K562 (cell line): ENCODE measurements at regions of chr6 and their contacts with region 1.

Region 1: GRCh38 chr6:97394160-97394748 is 111.2 kb upstream of the MMS22L start:
- DNase-seq: peak; percentile 59 to 73 (median 64)
- ATAC-seq: peak; percentile 81
- H3K4me3 ChIP-seq: no peak overlapping the region
- H3K27ac ChIP-seq: no peak overlapping the region
- H3K4me1 ChIP-seq: no peaks in the 10 kb centered on the region
- H3K27me3 ChIP-seq: no peaks in the 10 kb centered on the region
- CTCF ChIP-seq: peak; percentile 70 to 89 (median 72)
- EP300 ChIP-seq: no peak
- POLR2A ChIP-seq: no peak
- RAD21 ChIP-seq: peak; percentile 91 to 92

Region 2: GRCh38 chr6:97068211-97068610 is 326.0 kb before region 1 on chr6:
- CTCF ChIA-PET with region 1: no interaction called
- POLR2A ChIA-PET with region 1: no interaction called
- in situ Hi-C with region 1: loop called (anchors 10 kb)
- intact Hi-C with region 1: loop called (anchors 1 kb)
- DNase-seq: peak; percentile 11 to 43 (median 15)
- ATAC-seq: no peak
- H3K4me3 ChIP-seq: no peak overlapping the region
- H3K27ac ChIP-seq: no peak overlapping the region
- H3K4me1 ChIP-seq: no peaks in the 10 kb centered on the region
- H3K27me3 ChIP-seq: no peaks in the 10 kb centered on the region
- CTCF ChIP-seq: peak in 2 of 3 experiments; percentile 39 to 59; a peak in 3 of 6 replicates
- EP300 ChIP-seq: no peak
- POLR2A ChIP-seq: no peak
- RAD21 ChIP-seq: peak; percentile 70 to 72

Region 3: DNA sequence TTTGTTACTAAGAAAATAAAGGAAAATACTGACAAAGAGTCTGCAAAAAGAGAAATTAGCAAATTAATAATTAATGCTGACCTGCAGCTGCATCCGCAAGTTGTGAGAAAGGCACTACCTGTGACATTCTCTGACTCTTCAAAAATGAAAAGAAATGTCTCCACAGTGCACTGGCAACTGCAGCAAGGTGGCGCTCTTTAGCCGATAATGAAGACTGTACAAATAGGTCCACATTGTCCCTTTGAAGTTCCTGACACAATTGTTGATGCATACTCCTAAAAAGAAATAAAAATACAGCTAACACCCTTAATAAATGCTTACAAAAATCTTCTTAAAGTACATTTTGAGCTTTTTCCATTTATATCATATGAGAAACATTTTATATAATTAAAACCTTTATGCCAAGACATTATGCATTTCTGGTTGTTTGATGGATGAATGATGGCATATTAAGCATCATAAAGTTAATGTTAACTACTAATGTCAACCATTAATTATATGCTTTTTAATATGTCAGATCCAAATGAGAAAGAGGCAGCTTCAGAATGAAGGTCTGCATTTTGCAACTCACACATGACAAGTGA is 207.7 kb before region 1 on chr6:
- CTCF ChIA-PET with region 1: interaction called, 17 read pairs
- POLR2A ChIA-PET with region 1: no interaction called
- in situ Hi-C with region 1: loop called (anchors 5 kb)
- intact Hi-C with region 1: loop called (anchors 1 kb)
- DNase-seq: peak; percentile 38 to 77 (median 48)
- ATAC-seq: peak; percentile 96
- H3K4me3 ChIP-seq: no peak overlapping the region
- H3K27ac ChIP-seq: no peak overlapping the region
- H3K4me1 ChIP-seq: no peaks in the 10 kb centered on the region
- H3K27me3 ChIP-seq: no peaks in the 10 kb centered on the region
- CTCF ChIP-seq: peak; percentile 68 to 88 (median 83)
- EP300 ChIP-seq: no peak
- POLR2A ChIP-seq: no peak
- RAD21 ChIP-seq: peak; percentile 76 to 79

Region 4: GRCh38 chr6:97215157-97215769 is 179.0 kb before region 1 on chr6:
- CTCF ChIA-PET with region 1: no interaction called
- POLR2A ChIA-PET with region 1: no interaction called
- in situ Hi-C with region 1: no loop called
- intact Hi-C with region 1: loop called (anchors 1 kb)
- DNase-seq: peak; percentile 18 to 73 (median 34)
- ATAC-seq: peak; percentile 95
- H3K4me3 ChIP-seq: no peak overlapping the region
- H3K27ac ChIP-seq: peak overlapping the region; percentile 41; the same call in 2 of the 3 replicates
- H3K4me1 ChIP-seq: peaks cover 0 to 6% of the 10 kb centered on the region in 2 experiments; a peak in 3 of 5 replicates
- H3K27me3 ChIP-seq: no peaks in the 10 kb centered on the region
- CTCF ChIP-seq: peak; percentile 56 to 78 (median 64)
- EP300 ChIP-seq: 0 out of 2 replicates have a peak, but pooled peaks have one; percentile 8
- POLR2A ChIP-seq: no peak
- RAD21 ChIP-seq: peak; percentile 51 to 61

Region 5: DNA sequence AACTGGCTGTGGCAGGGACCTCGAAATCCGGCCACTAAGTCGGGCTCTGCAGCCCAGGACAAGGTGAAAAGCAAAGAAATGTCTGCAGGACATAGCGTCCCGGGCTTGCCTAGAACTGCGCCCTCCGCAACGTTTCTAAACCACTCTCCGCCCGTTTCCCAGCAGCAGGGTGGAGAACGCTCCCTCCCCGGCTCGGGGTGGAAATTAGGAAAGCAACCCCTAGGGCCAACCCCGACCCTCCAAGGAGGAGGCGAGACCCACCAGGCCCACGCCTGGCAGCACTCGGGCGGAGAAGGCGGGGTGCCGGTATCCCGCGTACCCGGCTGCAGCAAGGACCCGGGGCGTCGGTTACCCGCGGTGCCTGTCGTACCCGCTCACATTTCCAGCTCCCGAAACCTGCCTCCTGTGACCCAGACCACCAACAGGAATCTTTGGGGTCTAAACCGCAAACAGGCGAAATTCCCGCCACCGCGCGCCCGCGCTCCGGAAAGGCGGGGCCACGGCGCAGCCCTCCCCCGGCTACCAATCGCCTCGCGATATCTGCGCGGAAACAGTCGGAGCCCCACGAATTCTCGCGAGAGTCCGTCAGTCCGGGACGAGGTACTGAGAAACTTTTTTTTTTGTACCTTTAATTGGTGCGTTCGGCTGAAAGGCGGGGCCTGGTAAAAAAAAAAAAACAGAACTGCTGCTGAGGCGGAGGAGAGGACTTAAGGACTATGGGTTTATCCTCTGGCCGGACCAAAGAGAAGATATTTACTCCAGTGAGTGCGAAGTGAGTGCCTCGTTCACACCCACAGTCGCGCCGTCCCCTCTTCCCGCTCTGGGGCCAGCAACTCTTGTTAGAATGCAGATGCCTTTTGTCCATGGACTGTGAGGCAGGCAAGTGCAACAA is 111.3 kb before region 1 on chr6 and contains the start of gene MMS22L:
- CTCF ChIA-PET with region 1: no interaction called
- POLR2A ChIA-PET with region 1: no interaction called
- in situ Hi-C with region 1: no loop called
- intact Hi-C with region 1: loop called (anchors 5 kb)
- DNase-seq: peak; percentile 91 to 96 (median 92)
- ATAC-seq: peak; percentile 97
- H3K4me3 ChIP-seq: peak within 1 kb of the TSS; percentile 94
- H3K27ac ChIP-seq: peak within 1 kb of the TSS; percentile 94
- H3K4me1 ChIP-seq: peaks cover 0 to 3% of the 10 kb centered on the region in 2 experiments; a peak in 2 of 5 replicates
- H3K27me3 ChIP-seq: no peaks in the 10 kb centered on the region
- CTCF ChIP-seq: peak in 1 of 3 experiments; percentile 34; a peak in 2 of 6 replicates
- EP300 ChIP-seq: no peak
- POLR2A ChIP-seq: peak; percentile 80
- RAD21 ChIP-seq: no peak
- polyA plus RNA-seq, gene MMS22L: 13.0 to 13.1 TPM

Region 6: DNA sequence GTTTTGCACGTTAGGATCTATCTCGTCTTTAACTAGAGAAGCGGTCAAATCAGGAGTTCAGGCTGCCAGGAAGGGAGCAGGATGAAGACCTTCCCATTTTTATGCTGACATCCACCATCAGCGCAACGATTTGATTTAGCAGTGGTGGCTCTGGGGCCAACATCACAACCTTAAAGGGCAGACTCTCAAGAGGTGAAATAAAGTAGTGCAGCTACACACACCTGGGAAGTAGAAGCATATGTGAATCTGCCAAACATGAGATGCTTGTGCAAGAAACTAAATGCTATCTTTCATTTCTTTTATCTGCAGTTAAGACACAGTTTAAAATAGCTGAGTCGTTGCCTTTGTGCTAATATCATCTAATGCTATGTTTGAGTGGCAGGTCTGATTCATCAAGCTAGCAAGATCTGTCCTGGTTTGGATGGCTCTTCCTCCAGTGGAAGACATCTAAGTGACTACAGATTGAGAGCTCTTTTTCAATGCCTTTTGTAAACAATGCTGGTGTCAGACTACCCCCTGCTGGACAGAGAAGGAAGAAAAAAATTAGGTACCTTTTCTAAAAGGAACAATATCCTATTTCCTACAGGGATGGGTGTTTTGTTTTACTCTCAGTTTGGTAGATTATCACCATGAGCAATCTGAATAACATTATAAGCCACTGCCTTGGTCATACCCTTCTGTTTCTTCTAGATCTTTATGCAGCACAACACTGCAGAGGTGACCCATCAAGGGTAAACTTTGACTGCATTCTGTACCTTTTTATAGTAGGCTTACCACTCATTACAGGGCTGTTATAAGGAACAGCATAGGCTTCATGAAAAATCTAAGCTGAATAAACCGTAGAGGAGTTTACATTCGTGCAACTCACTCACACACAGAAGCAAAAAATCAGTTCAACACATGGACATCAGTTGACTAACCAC is 1725.1 kb after region 1 on chr6:
- CTCF ChIA-PET with region 1: no interaction called
- POLR2A ChIA-PET with region 1: no interaction called
- in situ Hi-C with region 1: no loop called
- intact Hi-C with region 1: loop called (anchors 10 kb)
- DNase-seq: peak; percentile 30 to 53 (median 40)
- ATAC-seq: peak; percentile 59; the same call in 2 of the 3 replicates
- H3K4me3 ChIP-seq: no peak overlapping the region
- H3K27ac ChIP-seq: no peak overlapping the region
- H3K4me1 ChIP-seq: no peaks in the 10 kb centered on the region
- H3K27me3 ChIP-seq: no peaks in the 10 kb centered on the region
- CTCF ChIP-seq: peak; percentile 51 to 75 (median 64); a peak in 5 of 6 replicates
- EP300 ChIP-seq: no peak
- POLR2A ChIP-seq: no peak
- RAD21 ChIP-seq: peak; percentile 78 to 87